K562 (cell line): ENCODE measurements at regions of chr12 and their contacts with region 1.

Region 1: DNA sequence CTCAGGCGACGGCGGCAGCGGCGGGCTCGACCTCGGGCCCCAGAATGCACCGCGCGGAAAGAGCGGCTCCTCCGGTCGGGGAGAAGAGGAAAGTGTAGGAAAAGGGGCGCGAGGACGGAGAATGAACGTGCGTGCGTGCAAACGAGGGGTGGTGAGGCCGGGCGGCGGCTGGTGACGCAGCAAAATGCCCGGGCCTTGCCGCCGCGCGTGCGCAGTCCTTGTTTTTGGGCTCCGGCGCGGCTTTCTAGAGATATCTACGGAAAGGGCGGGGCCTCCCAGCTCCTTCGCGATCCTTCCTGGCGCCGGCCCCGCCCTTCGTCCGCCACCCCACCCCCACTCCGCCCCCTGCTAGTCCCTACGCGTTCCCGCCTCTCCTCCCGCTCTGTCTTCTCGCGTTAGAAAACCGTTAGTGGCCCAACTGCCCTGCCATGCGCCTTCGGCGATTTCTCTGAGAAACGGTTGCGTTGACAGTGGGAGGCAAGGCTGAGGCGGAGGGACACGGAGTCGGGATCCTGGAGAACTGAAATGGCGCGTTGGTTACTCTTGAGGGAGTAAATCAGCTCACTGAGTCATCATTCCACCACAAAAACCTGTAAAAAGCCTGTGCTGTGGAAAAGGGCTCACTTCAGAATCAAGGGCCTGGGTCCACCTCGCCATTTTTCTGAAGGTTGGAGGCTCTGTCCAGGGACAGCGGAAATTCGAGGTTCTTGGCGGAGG is at the start of gene PTGES3:
- DNase-seq: peak; percentile 93 to 99 (median 96)
- ATAC-seq: peak; percentile 74
- H3K4me3 ChIP-seq: peak within 1 kb of the TSS; percentile 97
- H3K27ac ChIP-seq: peak within 1 kb of the TSS; percentile 99
- H3K4me1 ChIP-seq: peaks cover 0 to 25% of the 10 kb centered on the region in 2 experiments; a peak in 4 of 5 replicates
- H3K27me3 ChIP-seq: no peaks in the 10 kb centered on the region
- CTCF ChIP-seq: 0 out of 6 replicates have a peak, but pooled peaks of 1 of the 3 experiments have one; percentile 10
- EP300 ChIP-seq: peak; percentile 57
- POLR2A ChIP-seq: peak; percentile 98
- RAD21 ChIP-seq: no peak
- polyA plus RNA-seq, gene PTGES3: 163 to 185 TPM

Region 2: DNA sequence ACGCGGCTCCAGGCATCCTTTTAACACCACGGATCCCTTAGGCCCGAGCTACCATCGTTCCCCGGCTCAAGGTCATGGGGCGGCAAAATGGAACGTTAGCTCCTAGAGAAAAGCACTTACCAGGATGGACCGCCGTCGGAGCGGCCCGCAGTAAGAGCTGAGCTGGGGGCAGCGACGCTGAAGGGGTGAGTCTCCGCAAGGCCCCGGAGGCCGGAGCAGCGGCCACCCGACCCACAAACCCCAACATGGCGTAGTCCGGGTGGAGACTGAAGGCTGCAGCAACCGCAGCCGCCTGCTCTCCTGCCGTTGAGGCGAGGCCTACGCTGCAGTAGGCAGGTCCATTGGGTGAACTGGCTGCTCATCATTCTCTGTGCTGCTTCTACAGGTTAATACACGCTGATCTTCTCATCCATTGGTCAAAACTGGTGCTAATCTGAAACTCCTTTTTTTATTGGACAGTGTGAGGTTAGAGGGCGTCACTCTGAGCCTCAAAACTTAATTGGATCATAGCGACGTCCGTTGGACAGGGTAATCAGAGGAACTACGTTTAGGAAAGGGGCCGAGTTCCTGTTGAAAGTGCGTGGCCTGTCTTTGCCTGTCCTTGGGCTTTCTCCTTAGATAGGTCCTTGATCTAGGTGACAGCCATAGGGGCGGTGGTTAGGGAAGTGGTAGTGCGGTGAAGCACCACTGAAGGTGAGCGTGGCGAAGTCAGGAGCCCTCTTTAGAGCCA is 42.4 kb before region 1 on chr12 and contains the start of gene ATP5F1B:
- CTCF ChIA-PET with region 1: no interaction called
- POLR2A ChIA-PET with region 1: interaction called, 10 read pairs
- in situ Hi-C with region 1: no loop called
- intact Hi-C with region 1: no loop called
- DNase-seq: peak; percentile 90 to 99 (median 96)
- ATAC-seq: peak; percentile 98
- H3K4me3 ChIP-seq: peak within 1 kb of the TSS; percentile 81
- H3K27ac ChIP-seq: peak within 1 kb of the TSS; percentile 96
- H3K4me1 ChIP-seq: peaks cover 4 to 19% of the 10 kb centered on the region in 2 experiments
- H3K27me3 ChIP-seq: no peaks in the 10 kb centered on the region
- CTCF ChIP-seq: no peak; a peak in 1 of 6 replicates
- EP300 ChIP-seq: peak; percentile 14; the same call in 1 of the 2 replicates
- POLR2A ChIP-seq: peak; percentile 99
- RAD21 ChIP-seq: no peak
- polyA plus RNA-seq, gene ATP5F1B: 1,043 to 1,482 TPM

Region 3: GRCh38 chr12:56677680-56678079 is 10.6 kb before region 1 on chr12:
- CTCF ChIA-PET with region 1: no interaction called
- POLR2A ChIA-PET with region 1: interaction called, 25 read pairs
- in situ Hi-C with region 1: no loop called
- intact Hi-C with region 1: no loop called
- DNase-seq: no peak
- ATAC-seq: no peak
- H3K4me3 ChIP-seq: no peak overlapping the region
- H3K27ac ChIP-seq: peak overlapping the region; percentile 3; the same call in 1 of the 3 replicates
- H3K4me1 ChIP-seq: peaks cover 21 to 63% of the 10 kb centered on the region in 2 experiments; a peak in 4 of 5 replicates
- H3K27me3 ChIP-seq: no peaks in the 10 kb centered on the region
- CTCF ChIP-seq: no peak
- EP300 ChIP-seq: no peak
- POLR2A ChIP-seq: no peak
- RAD21 ChIP-seq: no peak

Region 4: DNA sequence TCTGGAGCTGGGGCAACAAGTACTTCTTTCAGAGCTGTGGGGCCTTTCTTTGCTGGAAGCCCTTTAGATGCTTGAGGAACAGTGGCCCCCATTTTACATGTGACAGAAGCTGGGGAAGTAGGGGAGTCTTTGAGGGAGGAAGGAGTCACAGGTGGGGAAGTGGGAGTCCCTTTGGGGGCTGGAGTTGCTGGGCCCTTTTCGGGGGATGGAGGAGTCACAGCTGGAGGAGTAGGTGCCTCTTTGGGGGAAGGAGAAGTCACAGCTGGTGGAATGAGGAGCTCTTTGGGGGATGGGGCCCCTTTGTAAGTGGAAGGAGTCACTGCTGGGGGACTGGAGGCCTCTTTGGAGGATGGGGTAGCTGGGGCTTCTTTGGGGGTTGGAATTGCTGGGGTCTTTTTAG is 28.2 kb after region 1 on chr12:
- CTCF ChIA-PET with region 1: no interaction called
- POLR2A ChIA-PET with region 1: interaction called, 11 read pairs
- in situ Hi-C with region 1: no loop called
- intact Hi-C with region 1: no loop called
- DNase-seq: peak in 2 of 4 experiments; percentile 25 to 32
- ATAC-seq: no peak
- H3K4me3 ChIP-seq: no peak overlapping the region
- H3K27ac ChIP-seq: peak overlapping the region; percentile 19; the same call in 1 of the 3 replicates
- H3K4me1 ChIP-seq: peaks cover 22 to 28% of the 10 kb centered on the region in 2 experiments
- H3K27me3 ChIP-seq: no peaks in the 10 kb centered on the region
- CTCF ChIP-seq: no peak
- EP300 ChIP-seq: no peak
- POLR2A ChIP-seq: peak; percentile 7; the same call in 1 of the 2 replicates
- RAD21 ChIP-seq: no peak

Region 5: GRCh38 chr12:56751712-56752598 is 63.7 kb after region 1 on chr12 and contains the start of gene PRIM1:
- CTCF ChIA-PET with region 1: no interaction called
- POLR2A ChIA-PET with region 1: interaction called, 4 read pairs
- in situ Hi-C with region 1: no loop called
- intact Hi-C with region 1: loop called (anchors 2 kb)
- DNase-seq: peak; percentile 90 to 96 (median 93)
- ATAC-seq: peak; percentile 90
- H3K4me3 ChIP-seq: peak within 1 kb of the TSS; percentile 72
- H3K27ac ChIP-seq: peak within 1 kb of the TSS; percentile 97
- H3K4me1 ChIP-seq: peaks cover 11 to 16% of the 10 kb centered on the region in 2 experiments; a peak in 4 of 5 replicates
- H3K27me3 ChIP-seq: no peaks in the 10 kb centered on the region
- CTCF ChIP-seq: no peak
- EP300 ChIP-seq: no peak
- POLR2A ChIP-seq: peak; percentile 94
- RAD21 ChIP-seq: no peak
- polyA plus RNA-seq, gene PRIM1: 175 to 179 TPM

Region 6: DNA sequence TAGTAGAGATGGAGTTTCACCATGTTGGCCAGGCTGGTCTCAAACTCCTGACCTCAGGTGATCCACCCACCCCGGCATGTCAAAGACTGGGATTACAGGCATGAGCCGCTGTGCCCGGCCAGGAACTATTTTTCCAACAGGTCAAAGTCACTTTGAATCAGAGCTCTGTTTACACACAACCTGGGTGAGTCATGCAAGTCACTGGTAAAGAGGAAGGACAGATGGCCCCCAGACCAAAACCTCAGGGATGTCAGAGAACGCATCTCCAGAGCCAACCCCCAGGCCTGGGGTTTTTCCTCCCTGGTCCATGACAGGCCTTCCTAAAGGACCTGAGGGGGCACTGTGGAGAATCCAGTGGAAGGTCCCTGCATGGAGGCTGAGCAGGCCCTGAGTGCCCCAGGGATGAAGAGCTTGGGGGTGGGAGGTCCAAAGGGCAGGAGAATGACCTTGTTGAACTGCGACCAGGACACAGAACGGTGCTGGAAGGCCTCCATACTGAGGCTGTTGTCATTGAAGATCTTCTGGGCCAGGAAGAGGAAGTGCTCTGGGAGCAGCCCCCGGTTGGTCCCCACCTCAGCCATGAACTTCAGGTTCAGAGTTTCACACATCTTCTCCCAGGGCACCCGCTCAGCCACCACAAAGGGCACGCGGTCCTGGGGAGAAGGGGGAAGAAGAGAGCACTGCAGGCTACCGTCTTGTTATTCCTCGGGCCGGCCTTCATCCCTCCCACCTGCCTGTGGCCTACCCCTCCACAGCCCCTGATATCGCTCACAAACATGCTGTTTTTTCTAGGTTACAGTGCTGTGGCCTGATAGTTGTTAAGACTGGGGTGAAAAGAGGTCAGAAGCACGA is 413.8 kb after region 1 on chr12:
- CTCF ChIA-PET with region 1: no interaction called
- POLR2A ChIA-PET with region 1: no interaction called
- in situ Hi-C with region 1: no loop called
- intact Hi-C with region 1: no loop called
- DNase-seq: peak; percentile 64 to 84 (median 74)
- ATAC-seq: peak; percentile 83
- H3K4me3 ChIP-seq: no peak overlapping the region
- H3K27ac ChIP-seq: peak overlapping the region; percentile 76
- H3K4me1 ChIP-seq: peaks cover 33 to 65% of the 10 kb centered on the region in 2 experiments
- H3K27me3 ChIP-seq: no peaks in the 10 kb centered on the region
- CTCF ChIP-seq: 0 out of 6 replicates have a peak, but pooled peaks of 1 of the 3 experiments have one; percentile 16
- EP300 ChIP-seq: peak; percentile 41; the same call in 1 of the 2 replicates
- POLR2A ChIP-seq: 0 out of 2 replicates have a peak, but pooled peaks have one; percentile 38
- RAD21 ChIP-seq: no peak